Psoas muscle (tissue), 8 donors: ENCODE measurements at regions of chr12 and their contacts with region 1.

Region 1: GRCh38 chr12:13661005-13661887 is 320.2 kb downstream of the GRIN2B start:
- DNase-seq: peak; percentile 12 to 50
- ATAC-seq: peak in 3 of 4 donors; percentile 57 to 76 (median 75)
- H3K4me3 ChIP-seq: no peak overlapping the region
- H3K27ac ChIP-seq: no peak overlapping the region
- H3K4me1 ChIP-seq: no peaks in the 10 kb centered on the region
- H3K27me3 ChIP-seq: no peaks in the 10 kb centered on the region
- CTCF ChIP-seq: peak; percentile 74

Region 2: DNA sequence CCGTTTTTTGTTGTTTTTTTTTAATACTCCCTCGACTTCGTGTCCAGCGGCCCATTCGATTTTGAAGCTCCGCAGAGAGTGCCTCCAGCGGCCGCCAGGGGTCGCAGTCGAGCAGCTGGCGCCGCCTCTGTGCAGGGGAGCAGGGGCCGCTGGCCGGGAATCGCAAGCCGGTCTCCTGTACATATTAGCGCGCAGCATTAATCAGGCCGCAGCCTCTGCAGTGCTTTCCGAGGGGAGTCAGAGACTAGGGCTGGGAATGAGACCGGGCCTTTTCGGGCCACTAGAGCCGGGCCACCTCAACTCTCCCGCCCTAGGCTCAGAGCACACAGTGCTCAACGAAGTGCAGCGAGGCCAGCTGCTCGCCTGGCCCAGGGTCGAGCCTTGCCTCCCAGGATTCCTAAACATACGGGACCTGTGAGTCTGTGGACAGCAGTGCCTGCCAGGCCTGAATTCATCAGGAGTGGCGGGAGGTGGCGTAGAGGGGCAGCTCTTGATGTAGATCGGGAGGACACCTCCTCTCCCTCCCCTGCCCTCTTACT is 382.9 kb before region 1 on chr12:
- intact Hi-C with region 1: loop called (anchors 5 to 10 kb)
- DNase-seq: peak; percentile 69 to 81
- ATAC-seq: peak; percentile 82 to 98 (median 92)
- H3K4me3 ChIP-seq: peak overlapping the region; percentile 44
- H3K27ac ChIP-seq: no peak overlapping the region
- H3K4me1 ChIP-seq: no peaks in the 10 kb centered on the region
- H3K27me3 ChIP-seq: peaks cover 0 to 36% (median 2%) of the 10 kb centered on the region in 3 donors
- CTCF ChIP-seq: peak; percentile 97

Region 3: GRCh38 chr12:13362260-13362841 is 298.9 kb before region 1 on chr12:
- intact Hi-C with region 1: loop called in 1 of 2 experiments (anchors 5 kb)
- DNase-seq: peak; percentile 50 to 57
- ATAC-seq: peak; percentile 68 to 93 (median 86)
- H3K4me3 ChIP-seq: no peak overlapping the region
- H3K27ac ChIP-seq: no peak overlapping the region
- H3K4me1 ChIP-seq: no peaks in the 10 kb centered on the region
- H3K27me3 ChIP-seq: peaks cover 0 to 3% (median 0%) of the 10 kb centered on the region in 3 donors
- CTCF ChIP-seq: peak; percentile 83

Region 4: DNA sequence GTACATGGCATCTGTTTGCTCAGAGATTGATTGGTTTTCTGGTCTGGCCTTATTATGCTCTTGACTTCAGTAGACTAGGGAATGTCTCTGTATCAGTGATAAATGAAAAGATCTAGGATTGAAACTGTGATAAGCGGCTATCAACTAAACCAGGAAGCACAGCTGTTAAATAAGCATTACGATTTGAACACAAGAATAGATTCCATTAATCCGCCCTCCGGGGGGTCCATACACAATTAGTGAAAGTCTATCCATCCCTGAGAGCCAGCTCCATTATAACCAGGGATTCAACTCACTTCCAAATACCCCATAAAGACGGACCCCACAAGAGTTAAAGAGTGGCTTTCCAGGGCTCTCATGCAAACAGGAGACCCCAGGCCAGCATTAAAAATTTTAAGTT is 41.1 kb after region 1 on chr12:
- intact Hi-C with region 1: no loop called
- DNase-seq: no peak
- ATAC-seq: no peak
- H3K4me3 ChIP-seq: no peak overlapping the region
- H3K27ac ChIP-seq: no peak overlapping the region
- H3K4me1 ChIP-seq: no peaks in the 10 kb centered on the region
- H3K27me3 ChIP-seq: peaks cover 0 to 3% (median 0%) of the 10 kb centered on the region in 3 donors
- CTCF ChIP-seq: no peak